ENCODE measurements at regions of chr12 and their contacts with region 1.

Region 1: GRCh38 chr12:99745895-99746294 is 98.3 kb downstream of the GARIN6 start:
- DNase-seq: no peak
- ATAC-seq: no peak
- H3K4me3 ChIP-seq: no peak overlapping the region
- H3K27ac ChIP-seq: no peak overlapping the region
- H3K4me1 ChIP-seq: no peaks in the 10 kb centered on the region
- H3K27me3 ChIP-seq: no peaks in the 10 kb centered on the region
- CTCF ChIP-seq: no peak

Region 2: GRCh38 chr12:99759444-99759843 is 13.5 kb after region 1 on chr12:
- intact Hi-C with region 1: loop called in 1 of 10 experiments (anchors 2 kb)
- DNase-seq: no peak
- ATAC-seq: no peak
- H3K4me3 ChIP-seq: no peak overlapping the region
- H3K27ac ChIP-seq: no peak overlapping the region
- H3K4me1 ChIP-seq: no peaks in the 10 kb centered on the region
- H3K27me3 ChIP-seq: no peaks in the 10 kb centered on the region
- CTCF ChIP-seq: no peak